WTC11 (cell line): ENCODE measurements at regions of chr17 and their contacts with region 1.

Region 1: DNA sequence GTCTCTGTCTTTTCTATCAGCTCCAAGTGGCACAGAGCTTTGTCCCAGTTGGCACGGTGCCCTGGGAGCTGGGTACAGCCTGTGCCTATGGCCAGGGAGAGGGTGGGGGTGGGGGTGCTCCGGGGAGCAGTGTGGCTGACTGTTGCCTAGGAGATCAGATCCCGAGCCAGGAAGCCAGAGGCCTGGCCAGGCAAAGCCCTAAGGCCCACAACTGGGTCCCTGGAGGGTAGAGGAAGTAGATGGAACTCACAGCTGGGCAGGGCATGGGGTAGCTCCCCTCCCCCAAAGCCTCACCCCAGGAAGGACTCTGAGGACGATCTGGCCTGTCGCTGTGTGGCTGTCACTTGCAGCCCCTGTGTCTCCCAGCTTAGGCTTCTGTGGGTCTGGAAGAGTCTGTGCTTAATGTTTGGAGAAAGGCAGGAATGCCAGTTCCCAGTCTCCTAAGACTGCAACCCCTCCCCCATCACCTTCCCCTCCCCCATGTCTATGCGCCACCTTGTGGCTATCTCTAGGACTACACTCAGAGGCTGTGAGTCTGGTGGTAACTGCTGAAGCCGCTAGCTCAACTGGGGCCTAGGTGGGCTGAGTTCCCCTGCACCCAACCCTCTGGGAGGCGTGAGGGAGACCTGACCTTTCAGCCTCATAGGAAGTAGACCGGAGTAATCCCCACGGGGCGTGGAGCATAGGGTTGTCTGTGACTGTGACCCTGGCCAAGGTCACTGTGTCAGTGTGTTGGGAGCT is 12.6 kb downstream of the THRA start:
- DNase-seq: peak; percentile 87
- ATAC-seq: peak; percentile 74
- H3K4me3 Mint-ChIP-seq: no peak overlapping the region
- H3K27ac Mint-ChIP-seq: peak overlapping the region; percentile 70; the same call in 1 of the 2 replicates
- H3K4me1 Mint-ChIP-seq: peaks cover 47% of the 10 kb centered on the region
- H3K27me3 Mint-ChIP-seq: no peaks in the 10 kb centered on the region
- CTCF ChIP-seq: peak; percentile 88

Region 2: GRCh38 chr17:39995438-39995837 is 79.9 kb before region 1 on chr17:
- CTCF ChIA-PET with region 1: no interaction called
- POLR2A ChIA-PET with region 1: no interaction called
- DNase-seq: no peak
- ATAC-seq: no peak
- H3K4me3 Mint-ChIP-seq: no peak overlapping the region
- H3K27ac Mint-ChIP-seq: no peak overlapping the region
- H3K4me1 Mint-ChIP-seq: no peaks in the 10 kb centered on the region
- H3K27me3 Mint-ChIP-seq: no peaks in the 10 kb centered on the region
- CTCF ChIP-seq: no peak

Region 3: DNA sequence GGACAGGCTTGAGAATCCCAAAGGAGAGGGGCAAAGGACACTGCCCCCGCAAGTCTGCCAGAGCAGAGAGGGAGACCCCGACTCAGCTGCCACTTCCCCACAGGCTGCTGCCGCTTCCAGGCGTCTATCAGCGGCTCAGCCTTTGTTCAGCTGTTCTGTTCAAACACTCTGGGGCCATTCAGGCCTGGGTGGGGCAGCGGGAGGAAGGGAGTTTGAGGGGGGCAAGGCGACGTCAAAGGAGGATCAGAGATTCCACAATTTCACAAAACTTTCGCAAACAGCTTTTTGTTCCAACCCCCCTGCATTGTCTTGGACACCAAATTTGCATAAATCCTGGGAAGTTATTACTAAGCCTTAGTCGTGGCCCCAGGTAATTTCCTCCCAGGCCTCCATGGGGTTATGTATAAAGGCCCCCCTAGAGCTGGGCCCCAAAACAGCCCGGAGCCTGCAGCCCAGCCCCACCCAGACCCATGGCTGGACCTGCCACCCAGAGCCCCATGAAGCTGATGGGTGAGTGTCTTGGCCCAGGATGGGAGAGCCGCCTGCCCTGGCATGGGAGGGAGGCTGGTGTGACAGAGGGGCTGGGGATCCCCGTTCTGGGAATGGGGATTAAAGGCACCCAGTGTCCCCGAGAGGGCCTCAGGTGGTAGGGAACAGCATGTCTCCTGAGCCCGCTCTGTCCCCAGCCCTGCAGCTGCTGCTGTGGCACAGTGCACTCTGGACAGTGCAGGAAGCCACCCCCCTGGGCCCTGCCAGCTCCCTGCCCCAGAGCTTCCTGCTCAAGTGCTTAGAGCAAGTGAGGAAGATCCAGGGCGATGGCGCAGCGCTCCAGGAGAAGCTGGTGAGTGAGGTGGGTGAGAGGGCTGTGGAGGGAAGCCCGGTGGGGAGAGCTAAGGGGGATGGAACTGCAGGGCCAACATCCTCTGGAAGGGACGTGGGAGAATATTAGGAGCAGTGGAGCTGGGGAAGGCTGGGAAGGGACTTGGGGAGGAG is 60.1 kb before region 1 on chr17 and contains the start of gene CSF3:
- CTCF ChIA-PET with region 1: interaction called, 31 read pairs
- POLR2A ChIA-PET with region 1: no interaction called
- DNase-seq: no peak
- ATAC-seq: no peak
- H3K4me3 Mint-ChIP-seq: no peak within 1 kb of the TSS
- H3K27ac Mint-ChIP-seq: no peak within 1 kb of the TSS
- H3K4me1 Mint-ChIP-seq: peaks cover 47% of the 10 kb centered on the region
- H3K27me3 Mint-ChIP-seq: no peaks in the 10 kb centered on the region
- CTCF ChIP-seq: no peak
- total RNA-seq, gene CSF3: not detected in 3 replicates

Region 4: GRCh38 chr17:40026816-40027613 is 48.4 kb before region 1 on chr17:
- CTCF ChIA-PET with region 1: interaction called, 22 read pairs
- POLR2A ChIA-PET with region 1: interaction called, 3 read pairs
- DNase-seq: peak; percentile 93
- ATAC-seq: peak; percentile 99
- H3K4me3 Mint-ChIP-seq: no peak overlapping the region
- H3K27ac Mint-ChIP-seq: no peak overlapping the region
- H3K4me1 Mint-ChIP-seq: no peaks in the 10 kb centered on the region
- H3K27me3 Mint-ChIP-seq: no peaks in the 10 kb centered on the region
- CTCF ChIP-seq: peak; percentile 95

Region 5: DNA sequence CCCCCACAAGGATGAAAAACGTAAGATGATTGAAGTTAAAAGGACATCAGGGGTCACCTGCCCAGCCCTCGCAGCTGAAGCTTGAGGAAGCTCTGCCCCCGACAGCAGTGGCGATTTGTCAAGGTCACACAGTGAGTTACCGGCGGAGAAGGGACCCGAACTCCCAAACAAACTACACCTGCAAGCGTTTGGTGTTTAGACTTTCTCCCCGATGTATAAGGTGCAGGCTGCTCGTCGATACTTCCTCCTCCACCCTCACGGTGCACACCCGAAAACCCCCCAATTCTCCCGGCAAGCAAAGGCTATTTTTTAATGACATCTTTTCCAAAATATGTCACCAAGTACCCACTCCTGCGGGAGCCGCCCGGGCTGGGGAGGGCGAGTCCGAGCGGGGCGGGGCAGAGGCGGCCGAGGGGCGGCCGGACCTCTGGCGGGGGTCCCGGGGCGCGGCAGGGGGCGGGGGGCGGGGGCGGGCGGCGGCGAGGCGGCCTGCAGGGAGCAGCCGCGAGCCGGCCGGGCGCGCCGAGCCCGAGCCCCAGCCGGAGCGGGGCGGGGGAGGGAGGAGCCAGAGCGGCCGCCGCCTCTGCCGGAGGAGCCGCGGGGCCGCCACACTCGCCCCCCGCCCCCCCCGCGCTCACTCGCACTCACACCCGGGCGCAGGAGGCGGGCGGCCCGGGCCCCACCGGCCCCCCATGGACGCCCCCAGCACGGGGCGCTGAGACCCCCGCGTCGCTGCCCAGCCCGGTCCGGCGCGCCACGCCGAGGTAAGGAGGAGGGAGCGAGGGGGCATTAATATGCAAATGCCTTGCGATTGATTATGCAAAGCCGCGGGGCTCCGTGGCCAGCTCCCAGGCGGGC is 12.8 kb before region 1 on chr17 and contains the start of gene THRA:
- CTCF ChIA-PET with region 1: interaction called, 252 read pairs
- POLR2A ChIA-PET with region 1: interaction called, 8 read pairs
- DNase-seq: peak; percentile 53
- ATAC-seq: peak; percentile 64
- H3K4me3 Mint-ChIP-seq: peak within 1 kb of the TSS; percentile 86
- H3K27ac Mint-ChIP-seq: no peak within 1 kb of the TSS
- H3K4me1 Mint-ChIP-seq: peaks cover 62% of the 10 kb centered on the region
- H3K27me3 Mint-ChIP-seq: peaks cover 32% of the 10 kb centered on the region
- CTCF ChIP-seq: no peak
- total RNA-seq, gene THRA: 11.9 to 15.9 TPM (median 12.0 TPM) in 3 replicates

Region 6: GRCh38 chr17:40091691-40092397 is 16.5 kb after region 1 on chr17:
- CTCF ChIA-PET with region 1: interaction called, 111 read pairs
- POLR2A ChIA-PET with region 1: interaction called, 3 read pairs
- DNase-seq: no peak
- ATAC-seq: peak; percentile 29
- H3K4me3 Mint-ChIP-seq: no peak overlapping the region
- H3K27ac Mint-ChIP-seq: no peak overlapping the region
- H3K4me1 Mint-ChIP-seq: peaks cover 23% of the 10 kb centered on the region
- H3K27me3 Mint-ChIP-seq: no peaks in the 10 kb centered on the region; the same call in 1 of the 2 replicates
- CTCF ChIP-seq: no peak

Region 7: GRCh38 chr17:40107522-40108174 is 32.3 kb after region 1 on chr17:
- CTCF ChIA-PET with region 1: interaction called, 82 read pairs
- POLR2A ChIA-PET with region 1: interaction called, 9 read pairs
- DNase-seq: no peak
- ATAC-seq: no peak
- H3K4me3 Mint-ChIP-seq: 0 out of 2 replicates have a peak overlapping the region, but pooled peaks have one; percentile 26
- H3K27ac Mint-ChIP-seq: no peak overlapping the region
- H3K4me1 Mint-ChIP-seq: peaks cover 92% of the 10 kb centered on the region
- H3K27me3 Mint-ChIP-seq: peaks cover 53% of the 10 kb centered on the region
- CTCF ChIP-seq: no peak

Region 8: GRCh38 chr17:40139566-40140058 is 64.2 kb after region 1 on chr17:
- CTCF ChIA-PET with region 1: interaction called, 10 read pairs
- POLR2A ChIA-PET with region 1: interaction called, 3 read pairs
- DNase-seq: no peak
- ATAC-seq: no peak
- H3K4me3 Mint-ChIP-seq: peak overlapping the region; percentile 94
- H3K27ac Mint-ChIP-seq: peak overlapping the region; percentile 100
- H3K4me1 Mint-ChIP-seq: peaks cover 19% of the 10 kb centered on the region
- H3K27me3 Mint-ChIP-seq: no peaks in the 10 kb centered on the region
- CTCF ChIP-seq: no peak

Region 9: GRCh38 chr17:40209404-40210093 is 134.2 kb after region 1 on chr17:
- CTCF ChIA-PET with region 1: no interaction called
- POLR2A ChIA-PET with region 1: no interaction called
- DNase-seq: no peak
- ATAC-seq: no peak
- H3K4me3 Mint-ChIP-seq: no peak overlapping the region
- H3K27ac Mint-ChIP-seq: no peak overlapping the region
- H3K4me1 Mint-ChIP-seq: no peaks in the 10 kb centered on the region
- H3K27me3 Mint-ChIP-seq: no peaks in the 10 kb centered on the region; the same call in 1 of the 2 replicates
- CTCF ChIP-seq: no peak